Right ventricle myocardium inferior (tissue), 1 donor: ENCODE measurements at regions of chr17 and their contacts with region 1.

Region 1: GRCh38 chr17:1724506-1725362 is at the start of gene WDR81:
- DNase-seq: peak; percentile 97
- ATAC-seq: peak; percentile 82
- total RNA-seq, gene WDR81: 10.4 TPM

Region 2: DNA sequence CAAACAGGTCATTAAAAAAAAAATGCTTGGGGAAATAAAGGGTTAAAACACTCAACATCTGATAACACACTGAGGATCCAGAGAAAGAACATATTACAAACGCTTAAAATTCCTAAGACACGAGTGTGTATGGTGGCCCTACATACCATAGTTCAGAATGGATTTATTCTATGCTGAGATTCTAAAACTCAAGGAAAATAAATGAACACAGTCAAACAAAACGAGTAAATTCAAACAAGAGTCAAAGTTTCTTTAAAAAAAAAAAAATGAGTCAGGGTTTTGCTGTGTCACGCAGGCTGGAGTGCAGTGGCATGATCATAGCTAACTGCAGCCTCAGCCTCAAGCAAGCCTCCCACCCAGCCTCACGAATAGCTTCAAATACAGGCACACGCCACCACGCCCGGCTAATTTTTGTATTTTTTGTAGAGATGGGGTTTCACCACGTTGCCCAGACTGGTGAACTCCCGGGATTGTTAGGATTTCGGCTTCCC is 286.1 kb before region 1 on chr17:
- intact Hi-C with region 1: no loop called
- DNase-seq: no peak
- ATAC-seq: no peak

Region 3: DNA sequence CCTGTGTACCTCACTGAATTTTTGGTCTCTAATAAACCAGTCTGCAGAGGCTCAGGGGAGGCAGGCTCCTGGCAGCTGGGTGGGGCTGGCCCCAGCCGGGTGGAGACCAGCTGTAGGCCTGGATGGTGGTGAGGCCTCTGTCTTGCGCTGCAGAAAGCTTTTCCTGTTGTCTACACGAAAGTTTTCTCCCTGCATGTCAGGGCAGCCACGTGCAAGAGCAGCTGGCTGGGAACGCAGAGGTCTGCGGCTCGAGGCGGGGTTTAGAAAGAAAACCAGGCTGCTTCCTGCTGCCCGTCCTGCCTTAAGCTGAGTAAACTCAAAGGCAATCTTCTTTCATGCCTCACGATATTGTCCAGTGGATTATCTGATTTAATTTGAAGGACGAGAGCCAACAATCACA is 39.5 kb after region 1 on chr17:
- intact Hi-C with region 1: loop called (anchors 5 kb)
- DNase-seq: peak; percentile 86
- ATAC-seq: peak; percentile 75

Region 4: GRCh38 chr17:1847191-1847590 is 122.5 kb after region 1 on chr17:
- intact Hi-C with region 1: loop called (anchors 5 kb)
- DNase-seq: no peak
- ATAC-seq: peak; percentile 98

Region 5: GRCh38 chr17:1865252-1866037 is 140.7 kb after region 1 on chr17:
- intact Hi-C with region 1: loop called (anchors 5 kb)
- DNase-seq: no peak
- ATAC-seq: no peak